ENCODE measurements at regions of chr18 and their contacts with region 1.

Region 1: DNA sequence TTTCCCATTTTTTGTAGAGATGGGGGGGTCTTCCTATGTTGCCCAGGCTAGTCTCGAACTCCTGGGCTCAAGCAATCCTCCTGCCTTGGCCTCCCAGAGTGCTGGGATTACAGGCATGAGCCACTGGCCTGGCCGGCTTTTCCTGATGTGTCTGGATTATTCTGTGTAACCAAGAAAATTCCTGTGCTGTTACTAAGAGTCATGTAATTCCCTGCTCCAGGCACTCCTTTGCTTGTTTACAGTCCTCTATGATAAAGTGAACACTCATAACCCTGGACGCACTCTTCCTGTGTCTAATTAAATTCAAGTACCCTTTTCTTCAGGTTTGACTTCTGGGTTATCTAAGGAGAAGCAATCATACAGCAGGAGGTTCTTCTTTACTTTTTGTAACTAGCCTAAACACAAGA is 14.9 kb upstream of the CTDP1 start:
- DNase-seq: no peak
- ATAC-seq: no peak
- H3K4me3 ChIP-seq: no peak overlapping the region
- H3K27ac ChIP-seq: no peak overlapping the region
- H3K4me1 ChIP-seq: no peaks in the 10 kb centered on the region
- H3K27me3 ChIP-seq: peaks cover 9% of the 10 kb centered on the region; the same call in 1 of the 2 replicates
- CTCF ChIP-seq: no peak
- POLR2A ChIP-seq: no peak
- RAD21 ChIP-seq: no peak

Region 2: GRCh38 chr18:79720355-79720733 is 55.7 kb after region 1 on chr18:
- CTCF ChIA-PET with region 1: no interaction called
- POLR2A ChIA-PET with region 1: no interaction called
- RAD21 ChIA-PET with region 1: no interaction called
- intact Hi-C with region 1: loop called (anchors 10 kb)
- DNase-seq: no peak
- ATAC-seq: no peak
- H3K4me3 ChIP-seq: no peak overlapping the region
- H3K27ac ChIP-seq: no peak overlapping the region
- H3K4me1 ChIP-seq: no peaks in the 10 kb centered on the region
- H3K27me3 ChIP-seq: no peaks in the 10 kb centered on the region
- CTCF ChIP-seq: no peak
- POLR2A ChIP-seq: no peak
- RAD21 ChIP-seq: no peak